Common myeloid progenitor, CD34-positive (primary cell): ENCODE measurements at regions of chrX and their contacts with region 1.

Region 1: GRCh38 chrX:149248073-149248625 is 257.0 kb downstream of the IDS start:
- DNase-seq: no peak
- H3K4me3 ChIP-seq: no peak overlapping the region
- H3K27ac ChIP-seq: no peak overlapping the region
- H3K4me1 ChIP-seq: no peaks in the 10 kb centered on the region
- H3K27me3 ChIP-seq: no peaks in the 10 kb centered on the region

Region 2: GRCh38 chrX:148718790-148719189 is 529.4 kb before region 1 on chrX:
- CTCF ChIA-PET with region 1: no interaction called
- POLR2A ChIA-PET with region 1: interaction called, 10 read pairs
- DNase-seq: no peak
- H3K4me3 ChIP-seq: no peak overlapping the region
- H3K27ac ChIP-seq: no peak overlapping the region
- H3K4me1 ChIP-seq: no peaks in the 10 kb centered on the region
- H3K27me3 ChIP-seq: no peaks in the 10 kb centered on the region

Region 3: DNA sequence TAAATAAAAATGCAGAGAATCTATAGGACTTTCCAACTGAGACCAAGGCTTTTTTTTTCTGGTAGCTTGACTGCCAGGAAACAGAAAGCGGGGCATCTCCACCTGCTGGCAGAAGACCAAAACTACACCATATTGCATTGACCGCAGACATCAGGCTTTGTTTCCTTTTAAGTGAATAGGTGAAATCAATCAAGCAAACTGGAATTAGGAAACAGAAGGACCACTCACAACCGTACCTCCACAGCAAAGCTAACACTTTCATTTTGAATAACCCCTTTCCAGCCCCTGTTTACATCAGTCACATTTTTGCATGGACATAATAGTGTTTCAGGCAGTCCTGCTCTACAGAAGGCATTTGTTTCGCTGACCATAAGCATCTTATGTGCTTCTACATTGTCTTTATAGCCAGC is 38.8 kb after region 1 on chrX:
- CTCF ChIA-PET with region 1: no interaction called
- POLR2A ChIA-PET with region 1: no interaction called
- DNase-seq: peak; percentile 48 to 77 (median 73)
- H3K4me3 ChIP-seq: no peak overlapping the region
- H3K27ac ChIP-seq: no peak overlapping the region
- H3K4me1 ChIP-seq: no peaks in the 10 kb centered on the region
- H3K27me3 ChIP-seq: no peaks in the 10 kb centered on the region